ENCODE measurements at regions of chr2 and their contacts with region 1.

Region 1: DNA sequence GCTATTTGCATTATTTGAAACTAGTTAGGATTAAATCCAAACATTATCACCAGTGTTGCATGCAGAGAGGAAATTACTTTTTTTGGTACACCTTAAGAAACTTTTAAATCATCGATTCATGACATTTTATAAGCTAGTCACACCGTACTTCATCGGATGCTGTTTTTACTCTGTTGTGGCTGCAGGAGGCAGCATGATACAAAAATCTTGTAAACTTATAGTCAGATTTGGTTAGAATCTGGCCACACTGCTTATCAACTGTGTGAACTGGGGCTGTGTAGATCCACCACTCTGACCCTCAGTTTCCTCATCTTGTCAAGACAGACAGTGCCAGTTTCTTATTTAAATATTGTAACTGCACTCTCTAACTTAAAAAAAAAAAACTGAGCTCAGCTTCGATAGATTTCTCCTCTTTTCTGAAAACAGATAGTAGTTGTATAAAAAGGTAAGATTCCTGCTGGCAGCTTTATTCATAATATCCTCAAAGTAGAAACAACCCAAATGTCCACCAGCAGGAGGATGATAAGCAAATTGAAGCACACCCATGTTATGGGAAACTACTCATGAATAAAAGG is 77.8 kb downstream of the RAPGEF4 start:
- DNase-seq: peak in 1 of 6 donors; percentile 29
- ATAC-seq: peak; percentile 66 to 93 (median 84)
- H3K4me3 ChIP-seq: no peak overlapping the region
- H3K27ac ChIP-seq: no peak overlapping the region
- H3K4me1 ChIP-seq: no peaks in the 10 kb centered on the region
- H3K27me3 ChIP-seq: no peaks in the 10 kb centered on the region
- CTCF ChIP-seq: peak in 3 of 4 donors; percentile 16 to 21 (median 21)

Region 2: DNA sequence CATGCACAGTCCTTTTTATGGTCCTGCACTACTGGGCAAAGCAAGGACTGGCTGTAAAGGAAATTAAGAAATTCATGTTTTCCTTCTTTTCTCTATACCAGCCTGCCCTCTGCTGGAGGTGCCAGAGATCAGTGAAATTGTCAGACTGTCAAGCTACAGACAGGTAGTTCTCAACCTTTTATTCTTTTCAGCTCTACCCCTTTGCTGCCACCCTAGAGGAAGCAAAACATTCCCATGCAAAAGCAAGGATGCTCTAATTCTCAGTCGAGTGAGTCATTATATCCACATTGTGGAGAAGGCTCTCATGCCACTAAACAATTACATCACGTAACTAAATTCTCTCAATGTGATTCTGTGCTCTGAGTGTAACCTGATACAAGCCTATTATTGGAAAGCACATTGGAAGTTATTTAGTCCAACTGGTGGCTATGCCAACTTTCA is 102.8 kb before region 1 on chr2:
- intact Hi-C with region 1: no loop called
- DNase-seq: no peak
- ATAC-seq: peak in 3 of 4 donors; percentile 68 to 78 (median 74)
- H3K4me3 ChIP-seq: no peak overlapping the region
- H3K27ac ChIP-seq: no peak overlapping the region
- H3K4me1 ChIP-seq: no peaks in the 10 kb centered on the region
- H3K27me3 ChIP-seq: peaks cover 0 to 4% (median 0%) of the 10 kb centered on the region in 4 donors
- CTCF ChIP-seq: peak in 3 of 4 donors; percentile 22 to 33 (median 27)

Region 3: DNA sequence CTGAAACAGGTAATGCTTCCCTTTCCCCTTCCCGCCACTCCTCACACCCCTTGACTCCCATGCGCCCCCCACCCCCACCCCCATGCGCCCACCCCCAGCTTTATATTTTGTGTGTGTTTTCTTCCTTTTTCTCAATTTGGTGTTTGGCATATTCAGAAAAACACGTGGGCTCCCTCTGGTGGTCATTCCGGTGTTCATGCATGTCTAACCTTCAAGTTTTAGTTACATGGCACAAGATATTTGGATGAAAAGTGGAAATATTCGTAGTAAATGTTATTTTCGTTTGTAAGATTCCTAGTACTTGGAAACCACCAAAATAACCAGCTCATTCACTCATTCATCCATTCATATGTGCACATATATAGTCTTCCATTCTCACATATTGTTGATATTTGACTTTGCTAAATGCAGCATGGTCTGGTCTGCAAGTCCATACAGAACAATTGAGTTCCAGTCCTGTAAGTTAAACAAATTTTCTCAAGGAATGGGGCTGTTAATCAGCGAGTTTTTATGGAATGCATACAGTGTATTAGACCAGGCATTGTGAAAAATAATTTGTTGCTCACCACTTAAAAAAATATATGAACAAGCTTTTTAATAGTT is 118.6 kb after region 1 on chr2:
- intact Hi-C with region 1: loop called in 2 of 3 experiments (anchors 5 kb)
- DNase-seq: peak in 5 of 6 donors; percentile 47 to 82 (median 64)
- ATAC-seq: peak in 3 of 4 donors; percentile 42 to 65 (median 49)
- H3K4me3 ChIP-seq: no peak overlapping the region
- H3K27ac ChIP-seq: no peak overlapping the region
- H3K4me1 ChIP-seq: peaks cover 4 to 30% (median 22%) of the 10 kb centered on the region in 3 donors
- H3K27me3 ChIP-seq: no peaks in the 10 kb centered on the region
- CTCF ChIP-seq: peak; percentile 45 to 56 (median 47)